Tibial artery (tissue), 4 donors: ENCODE measurements at regions of chr20 and their contacts with region 1.

Region 1: DNA sequence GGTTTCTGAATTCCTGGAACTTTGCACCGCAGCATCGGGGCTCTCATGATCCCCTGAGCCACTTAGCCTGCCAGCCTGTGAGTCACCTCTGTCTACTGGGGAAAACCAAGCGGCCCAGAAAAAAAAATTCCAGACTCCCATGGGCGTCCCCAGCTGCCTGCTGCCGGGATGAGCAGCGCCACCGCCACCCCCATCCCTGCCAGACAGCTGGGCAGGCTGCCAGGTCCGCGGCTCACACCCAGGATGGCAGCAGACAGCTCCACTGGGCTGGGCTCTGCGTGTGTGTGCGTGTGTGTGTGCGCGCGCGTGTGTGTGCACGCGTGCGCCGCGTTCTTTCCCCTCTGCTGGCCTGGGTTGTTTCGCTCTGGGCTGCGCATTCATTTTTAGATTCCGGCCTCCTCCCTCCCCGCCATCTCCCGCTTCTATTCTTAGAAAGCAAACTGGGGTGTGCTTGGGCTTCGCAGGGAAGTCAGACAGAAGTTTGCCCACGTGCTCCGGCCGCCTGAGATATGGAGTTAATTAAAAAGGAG is 38.9 kb upstream of the PMEPA1 start:
- DNase-seq: peak; percentile 88 to 98
- H3K4me3 ChIP-seq: peak overlapping the region; percentile 32 to 53
- H3K27ac ChIP-seq: peak overlapping the region; percentile 87 to 93
- H3K4me1 ChIP-seq: peaks cover 8 to 29% (median 26%) of the 10 kb centered on the region in 4 donors
- H3K27me3 ChIP-seq: no peaks in the 10 kb centered on the region
- CTCF ChIP-seq: peak in 1 of 2 experiments; percentile 23

Region 2: GRCh38 chr20:57709931-57710799 is 38.5 kb before region 1 on chr20 and contains the start of gene PMEPA1:
- intact Hi-C with region 1: loop called (anchors 5 kb)
- DNase-seq: peak; percentile 94 to 98
- H3K4me3 ChIP-seq: peak within 1 kb of the TSS; percentile 86 to 89
- H3K27ac ChIP-seq: peak within 1 kb of the TSS; percentile 96 to 97
- H3K4me1 ChIP-seq: peaks cover 8 to 76% (median 69%) of the 10 kb centered on the region in 4 donors
- H3K27me3 ChIP-seq: no peaks in the 10 kb centered on the region
- CTCF ChIP-seq: peak; percentile 11 to 26

Region 3: DNA sequence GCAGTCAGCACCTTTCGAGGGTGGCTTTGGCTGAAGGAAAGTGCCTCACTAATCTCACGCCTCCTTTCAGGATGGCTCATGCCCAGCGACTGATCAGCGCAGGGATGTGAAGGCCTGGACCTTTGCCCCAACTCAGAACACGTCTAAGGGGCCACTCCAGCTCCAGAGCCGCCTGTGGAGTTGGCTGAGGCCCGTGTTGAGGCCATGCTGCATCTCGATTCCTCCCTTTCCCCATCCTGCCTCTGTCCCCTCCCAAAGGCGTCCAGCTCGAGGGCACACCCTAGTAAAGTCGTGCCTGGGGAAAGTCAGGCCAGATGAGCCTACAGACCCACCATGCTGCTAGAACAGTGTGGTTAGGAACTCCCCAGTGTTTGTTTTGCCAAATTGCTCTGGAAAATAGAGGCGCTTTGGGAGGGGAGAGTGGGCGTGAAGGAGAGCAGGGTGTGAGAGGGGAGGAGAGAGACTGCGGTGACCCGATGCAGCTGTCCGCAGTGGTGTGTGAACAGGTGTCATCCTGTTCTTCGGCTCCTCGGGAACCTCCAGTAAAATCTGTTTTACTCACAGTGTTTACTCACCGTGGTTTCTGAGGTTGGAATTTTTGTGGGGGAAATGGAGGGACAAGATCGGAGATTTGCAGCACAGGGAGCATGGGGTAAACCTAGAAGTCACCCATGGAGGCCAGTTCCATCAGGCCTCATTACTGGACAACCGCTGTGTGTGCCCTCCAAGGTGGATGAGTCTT is 46.1 kb after region 1 on chr20:
- intact Hi-C with region 1: no loop called
- DNase-seq: no peak
- H3K4me3 ChIP-seq: no peak overlapping the region
- H3K27ac ChIP-seq: no peak overlapping the region
- H3K4me1 ChIP-seq: no peaks in the 10 kb centered on the region
- H3K27me3 ChIP-seq: no peaks in the 10 kb centered on the region
- CTCF ChIP-seq: no peak